Activated CD8-positive, alpha-beta T cell treated with anti-CD3 and anti-CD28 coated beads, Interleukin-2, amount 10 ng/mL, durations not matched to agents 7 days and 5 days (primary cell): ENCODE measurements at regions of chr15 and their contacts with region 1.

Region 1: DNA sequence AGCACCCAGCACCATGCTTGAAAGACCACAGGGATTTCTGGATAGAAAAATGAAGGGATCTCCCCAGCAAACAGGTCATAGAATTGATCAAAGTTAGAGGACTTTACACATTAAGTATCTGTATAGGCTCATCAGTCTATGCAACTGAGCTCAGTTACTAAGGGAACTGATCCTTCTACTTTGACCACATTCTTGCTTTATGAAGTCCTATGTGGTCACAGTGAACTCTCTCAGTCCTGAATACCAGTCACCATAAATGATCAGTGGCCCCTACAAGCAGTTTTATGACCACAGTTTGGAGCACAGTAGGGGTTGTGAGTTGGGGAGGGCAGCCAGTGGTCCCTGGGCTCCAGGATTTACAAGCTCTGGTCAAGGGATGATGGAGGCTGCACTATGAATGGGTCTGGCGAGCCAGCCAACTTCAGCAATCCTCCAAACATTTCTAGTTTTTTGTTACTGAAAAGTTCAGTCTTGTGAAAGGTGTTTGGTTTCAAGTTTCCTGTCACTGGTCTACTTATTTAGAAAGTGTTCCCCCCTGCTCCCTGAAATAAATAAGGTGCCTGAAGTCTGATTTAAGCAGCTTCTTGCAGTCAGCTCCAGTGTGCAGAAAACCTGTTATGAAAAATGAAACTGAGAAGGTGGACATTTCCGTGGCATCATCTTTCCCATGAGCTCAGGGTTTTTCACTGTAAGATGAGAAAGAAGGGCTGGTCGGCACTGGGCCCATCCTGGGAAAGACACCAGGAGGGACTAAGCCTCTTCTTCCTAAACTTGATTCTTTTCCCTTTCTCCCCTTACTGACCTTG is 75.5 kb downstream of the DAPK2 start:
- DNase-seq: peak; percentile 44
- ATAC-seq: peak; percentile 76
- H3K4me3 Mint-ChIP-seq: peak overlapping the region; percentile 68
- H3K27ac Mint-ChIP-seq: peak overlapping the region; percentile 96
- H3K4me1 Mint-ChIP-seq: peaks cover 44% of the 10 kb centered on the region
- H3K27me3 Mint-ChIP-seq: no peaks in the 10 kb centered on the region

Region 2: GRCh38 chr15:63805993-63806980 is 164.5 kb before region 1 on chr15:
- CTCF ChIA-PET with region 1: no interaction called
- POLR2A ChIA-PET with region 1: no interaction called
- DNase-seq: no peak
- ATAC-seq: peak; percentile 23
- H3K4me3 Mint-ChIP-seq: no peak overlapping the region
- H3K27ac Mint-ChIP-seq: peak overlapping the region; percentile 65
- H3K4me1 Mint-ChIP-seq: peaks cover 60% of the 10 kb centered on the region
- H3K27me3 Mint-ChIP-seq: no peaks in the 10 kb centered on the region

Region 3: DNA sequence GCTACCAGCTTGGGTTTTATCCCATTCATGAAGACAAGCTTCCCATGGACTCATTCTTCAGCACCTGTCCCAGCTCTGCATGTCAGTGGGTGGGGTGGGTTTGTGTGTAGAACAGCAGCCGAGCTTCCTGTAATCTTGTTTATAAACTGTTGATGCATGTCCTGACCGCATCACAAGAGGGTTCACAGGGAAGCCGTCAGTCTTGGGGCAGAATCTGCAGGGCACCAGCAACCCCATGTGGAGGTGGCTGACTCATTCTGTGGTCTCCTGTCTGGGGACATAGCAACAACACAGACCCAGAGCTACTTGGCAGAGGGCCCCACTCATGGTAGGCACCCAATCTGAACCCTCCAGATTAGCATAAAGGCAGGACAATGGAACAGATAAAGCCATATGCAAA is 39.9 kb after region 1 on chr15:
- CTCF ChIA-PET with region 1: interaction called, 39 read pairs
- POLR2A ChIA-PET with region 1: interaction called, 3 read pairs
- DNase-seq: peak; percentile 92
- ATAC-seq: peak; percentile 100
- H3K4me3 Mint-ChIP-seq: peak overlapping the region; percentile 7
- H3K27ac Mint-ChIP-seq: peak overlapping the region; percentile 75
- H3K4me1 Mint-ChIP-seq: peaks cover 37% of the 10 kb centered on the region
- H3K27me3 Mint-ChIP-seq: peaks cover 5% of the 10 kb centered on the region